ENCODE measurements at regions of chrX and their contacts with region 1.

Region 1: DNA sequence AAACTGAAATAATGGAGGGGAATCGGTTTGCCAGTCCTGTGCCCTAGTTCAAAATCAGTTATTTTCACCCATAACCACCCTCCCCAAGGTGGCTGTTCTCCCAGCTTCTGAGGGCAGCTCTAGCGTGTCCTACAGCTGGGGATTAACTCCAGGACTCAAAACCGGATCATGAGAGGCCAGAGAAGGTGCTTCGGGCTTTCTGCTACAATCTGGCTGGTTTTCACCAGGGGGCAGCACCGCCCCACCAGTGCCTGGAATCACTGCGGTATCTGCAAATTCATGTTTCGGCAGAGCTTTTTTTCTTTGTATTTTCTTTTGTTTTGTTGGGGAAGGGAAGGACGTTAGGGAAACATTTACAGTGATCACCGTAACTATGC is 28.4 kb downstream of the PDHA1 start:
- DNase-seq: peak; percentile 68 to 86
- ATAC-seq: peak; percentile 59
- H3K4me3 ChIP-seq: peak overlapping the region in 1 of 2 donors; percentile 1
- H3K27ac ChIP-seq: no peak overlapping the region
- H3K4me1 ChIP-seq: no peaks in the 10 kb centered on the region
- H3K27me3 ChIP-seq: no peaks in the 10 kb centered on the region

Region 2: GRCh38 chrX:19121898-19122640 is 250.1 kb before region 1 on chrX and contains the start of gene ADGRG2:
- intact Hi-C with region 1: no loop called
- DNase-seq: peak; percentile 58 to 85
- ATAC-seq: peak; percentile 68
- H3K4me3 ChIP-seq: peak within 1 kb of the TSS; percentile 28 to 47
- H3K27ac ChIP-seq: no peak within 1 kb of the TSS
- H3K4me1 ChIP-seq: no peaks in the 10 kb centered on the region
- H3K27me3 ChIP-seq: no peaks in the 10 kb centered on the region
- total RNA-seq, gene ADGRG2: 1.7 to 4.3 TPM

Region 3: GRCh38 chrX:19535476-19535875 is 163.3 kb after region 1 on chrX:
- intact Hi-C with region 1: loop called (anchors 5 to 10 kb)
- DNase-seq: no peak
- ATAC-seq: no peak
- H3K4me3 ChIP-seq: no peak overlapping the region
- H3K27ac ChIP-seq: no peak overlapping the region
- H3K4me1 ChIP-seq: no peaks in the 10 kb centered on the region
- H3K27me3 ChIP-seq: no peaks in the 10 kb centered on the region